Endothelial cell of umbilical vein (primary cell): ENCODE measurements at regions of chr3 and their contacts with region 1.

Region 1: GRCh38 chr3:107987036-107987947 is 103.5 kb downstream of the CD47 start:
- DNase-seq: peak; percentile 95
- H3K4me3 ChIP-seq: no peak overlapping the region
- H3K27ac ChIP-seq: peak overlapping the region; percentile 47
- H3K4me1 ChIP-seq: peaks cover 33% of the 10 kb centered on the region
- H3K27me3 ChIP-seq: no peaks in the 10 kb centered on the region
- CTCF ChIP-seq: no peak
- POLR2A ChIP-seq: no peak

Region 2: DNA sequence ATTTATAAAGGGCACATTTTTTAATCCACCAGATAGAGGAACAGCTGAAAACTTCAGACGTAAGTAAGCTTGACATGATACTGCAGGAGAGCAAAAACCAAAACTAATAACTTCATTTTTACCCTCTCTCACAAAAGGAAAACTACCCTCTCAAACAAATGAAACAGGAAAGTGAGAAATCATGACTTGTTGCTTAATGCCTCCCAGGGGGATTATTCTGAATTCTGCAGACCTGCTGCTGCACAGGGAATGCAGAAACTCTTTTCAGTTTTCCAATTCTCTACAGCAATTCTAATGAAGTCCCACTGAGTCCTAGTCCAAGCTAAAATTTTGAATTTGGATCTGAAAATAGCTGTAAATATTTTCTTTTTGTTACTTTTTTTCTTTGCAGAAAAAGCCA is 1247.2 kb before region 1 on chr3:
- CTCF ChIA-PET with region 1: no interaction called
- POLR2A ChIA-PET with region 1: no interaction called
- dilution Hi-C with region 1: no loop called
- intact Hi-C with region 1: no loop called
- DNase-seq: no peak
- H3K4me3 ChIP-seq: no peak overlapping the region
- H3K27ac ChIP-seq: no peak overlapping the region
- H3K4me1 ChIP-seq: peaks cover 10% of the 10 kb centered on the region
- H3K27me3 ChIP-seq: no peaks in the 10 kb centered on the region
- CTCF ChIP-seq: no peak
- POLR2A ChIP-seq: no peak

Region 3: DNA sequence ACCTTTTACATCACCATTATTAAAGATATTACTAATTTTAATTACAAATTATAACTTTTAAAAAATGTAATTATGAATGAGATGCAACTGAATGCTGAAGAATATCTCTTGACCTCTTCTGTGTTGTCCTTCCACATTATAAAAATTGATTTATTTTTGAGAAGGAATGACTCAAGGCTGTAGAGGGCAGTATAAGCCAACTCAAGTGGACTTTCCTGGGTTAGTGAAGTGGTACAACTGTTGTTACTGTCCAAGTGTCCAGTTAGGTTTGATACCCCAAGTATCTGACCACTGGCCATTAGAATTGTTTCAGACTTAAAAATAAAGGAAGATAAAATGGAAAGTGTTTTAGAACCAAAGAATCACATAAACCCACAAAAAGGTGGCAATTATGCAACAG is 412.6 kb before region 1 on chr3:
- CTCF ChIA-PET with region 1: no interaction called
- POLR2A ChIA-PET with region 1: no interaction called
- dilution Hi-C with region 1: no loop called
- intact Hi-C with region 1: no loop called
- DNase-seq: peak; percentile 66
- H3K4me3 ChIP-seq: no peak overlapping the region
- H3K27ac ChIP-seq: no peak overlapping the region
- H3K4me1 ChIP-seq: no peaks in the 10 kb centered on the region
- H3K27me3 ChIP-seq: no peaks in the 10 kb centered on the region
- CTCF ChIP-seq: peak; percentile 33 to 46
- POLR2A ChIP-seq: no peak

Region 4: DNA sequence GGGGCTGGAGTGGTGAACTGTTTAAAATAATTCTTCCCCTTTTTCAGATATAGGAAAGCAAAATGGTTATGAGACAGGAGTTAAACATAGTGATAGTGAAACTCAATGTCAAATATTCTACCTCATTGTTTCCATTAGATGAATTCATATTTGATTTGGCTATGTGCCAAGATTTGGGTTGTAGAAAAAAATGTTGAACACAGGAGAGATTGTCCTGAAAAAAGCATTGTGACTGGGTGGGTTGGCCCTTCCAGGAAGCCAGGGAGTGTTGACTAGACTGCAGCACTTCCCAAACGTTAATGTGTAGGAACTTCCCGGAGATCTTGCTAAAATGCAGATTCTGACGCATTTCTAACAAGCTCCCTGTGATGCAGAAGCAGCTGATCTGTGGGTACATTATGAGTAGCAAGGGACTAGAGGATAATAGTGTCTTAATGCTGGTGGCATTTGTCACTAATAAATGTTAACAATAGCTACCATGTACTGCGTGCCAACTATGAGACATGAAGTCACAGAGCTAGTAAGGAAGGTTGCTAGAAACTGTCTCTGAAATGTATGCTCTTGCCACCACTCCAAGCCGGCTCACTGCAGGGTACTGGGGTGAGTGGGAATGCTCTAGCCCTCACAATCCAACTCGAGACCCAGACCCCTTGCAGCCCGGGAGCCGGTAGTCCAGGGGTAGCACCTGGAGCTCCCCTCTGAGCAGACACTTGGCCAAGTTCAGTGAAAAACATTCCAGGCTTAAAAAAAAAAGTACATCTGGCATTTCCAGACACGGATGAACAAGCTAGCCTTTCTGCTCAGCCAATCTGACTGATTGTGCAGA is 17.1 kb before region 1 on chr3:
- CTCF ChIA-PET with region 1: interaction called, 7 read pairs
- POLR2A ChIA-PET with region 1: no interaction called
- dilution Hi-C with region 1: no loop called
- intact Hi-C with region 1: loop called (anchors 2 kb)
- DNase-seq: peak; percentile 92
- H3K4me3 ChIP-seq: no peak overlapping the region
- H3K27ac ChIP-seq: peak overlapping the region; percentile 25
- H3K4me1 ChIP-seq: peaks cover 16% of the 10 kb centered on the region
- H3K27me3 ChIP-seq: no peaks in the 10 kb centered on the region
- CTCF ChIP-seq: no peak
- POLR2A ChIP-seq: no peak

Region 5: DNA sequence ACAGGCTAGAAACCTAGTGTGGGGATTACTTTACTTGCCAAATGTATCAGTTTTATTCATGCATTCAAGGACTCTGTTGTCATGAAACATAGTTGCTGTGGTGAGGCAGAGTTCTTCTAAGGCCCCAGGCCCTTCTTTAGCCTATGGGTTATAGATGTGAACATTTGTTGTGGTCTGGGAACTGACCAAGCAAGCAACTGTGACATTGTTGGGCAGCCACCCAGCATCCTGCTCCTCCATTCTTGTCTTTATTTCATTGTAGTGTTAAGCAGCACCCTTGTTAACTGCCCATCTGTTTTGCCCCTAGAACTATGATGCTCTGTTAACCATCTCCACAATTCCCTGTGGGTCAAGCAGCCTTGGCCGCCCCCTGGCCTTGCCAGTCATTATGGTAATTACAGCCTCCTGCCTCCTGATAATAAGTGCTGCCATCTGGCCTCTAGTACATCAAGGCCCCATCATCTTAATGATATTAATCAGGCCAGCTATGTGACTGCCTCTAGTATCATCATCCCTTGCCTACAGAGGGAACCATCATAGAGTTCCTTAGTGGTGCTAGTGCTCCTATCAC is 247.2 kb after region 1 on chr3:
- CTCF ChIA-PET with region 1: no interaction called
- POLR2A ChIA-PET with region 1: no interaction called
- dilution Hi-C with region 1: no loop called
- intact Hi-C with region 1: no loop called
- DNase-seq: no peak
- H3K4me3 ChIP-seq: no peak overlapping the region
- H3K27ac ChIP-seq: no peak overlapping the region
- H3K4me1 ChIP-seq: no peaks in the 10 kb centered on the region
- H3K27me3 ChIP-seq: peaks cover 0 to 1% of the 10 kb centered on the region in 2 experiments
- CTCF ChIP-seq: no peak
- POLR2A ChIP-seq: no peak